Left ventricle myocardium superior (tissue), 1 donor: ENCODE measurements at regions of chr20 and their contacts with region 1.

Region 1: DNA sequence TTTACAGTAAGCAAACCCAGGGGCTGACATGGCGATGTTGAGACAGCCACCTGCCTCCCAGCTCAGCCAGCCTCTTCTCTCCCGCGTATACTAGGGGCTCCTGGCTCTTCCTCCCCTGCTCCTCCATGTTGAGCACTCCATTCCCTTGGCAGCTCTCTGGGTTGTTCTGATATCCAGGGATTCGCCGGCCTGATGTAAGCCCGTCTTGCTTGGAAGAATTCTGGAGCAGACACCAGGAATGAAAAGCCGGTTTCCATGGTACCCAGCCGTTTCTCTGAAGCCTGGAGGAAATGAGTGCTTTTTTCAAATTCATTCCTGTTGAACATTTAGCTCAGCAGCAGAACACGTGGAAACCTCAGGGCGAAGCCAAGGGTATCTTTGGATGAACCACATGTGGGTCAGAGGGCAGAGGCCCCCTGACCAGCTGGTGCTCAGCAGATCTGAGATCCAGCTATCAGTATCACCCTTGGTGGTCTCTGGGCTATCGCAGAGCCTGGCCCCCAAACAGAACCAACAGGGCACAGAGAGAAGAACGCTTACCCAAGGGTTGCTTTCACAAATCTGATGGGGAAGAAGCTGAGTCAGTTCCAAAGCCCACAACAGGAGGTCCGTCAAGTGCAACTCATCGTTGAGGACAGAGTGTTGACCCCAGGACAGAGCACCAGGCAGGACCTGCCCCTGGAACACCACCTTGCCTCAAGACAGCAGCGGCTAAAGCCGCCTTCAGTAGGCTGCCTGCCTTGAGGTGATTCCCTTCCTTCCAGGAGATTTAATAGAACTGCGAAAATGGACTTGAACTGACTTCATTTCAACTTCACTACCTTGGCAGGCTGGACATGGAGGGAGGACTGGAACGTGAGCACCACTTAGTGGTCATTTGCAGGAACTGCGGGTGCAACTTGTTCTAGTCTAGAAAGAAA is 96.1 kb upstream of the RIN2 start:
- DNase-seq: peak; percentile 56
- ATAC-seq: peak; percentile 74

Region 2: GRCh38 chr20:19205977-19206396 is 456.0 kb before region 1 on chr20:
- intact Hi-C with region 1: loop called (anchors 5 kb)
- DNase-seq: peak; percentile 86
- ATAC-seq: peak; percentile 71

Region 3: GRCh38 chr20:19522071-19522801 is 139.7 kb before region 1 on chr20:
- intact Hi-C with region 1: no loop called
- DNase-seq: no peak
- ATAC-seq: no peak

Region 4: DNA sequence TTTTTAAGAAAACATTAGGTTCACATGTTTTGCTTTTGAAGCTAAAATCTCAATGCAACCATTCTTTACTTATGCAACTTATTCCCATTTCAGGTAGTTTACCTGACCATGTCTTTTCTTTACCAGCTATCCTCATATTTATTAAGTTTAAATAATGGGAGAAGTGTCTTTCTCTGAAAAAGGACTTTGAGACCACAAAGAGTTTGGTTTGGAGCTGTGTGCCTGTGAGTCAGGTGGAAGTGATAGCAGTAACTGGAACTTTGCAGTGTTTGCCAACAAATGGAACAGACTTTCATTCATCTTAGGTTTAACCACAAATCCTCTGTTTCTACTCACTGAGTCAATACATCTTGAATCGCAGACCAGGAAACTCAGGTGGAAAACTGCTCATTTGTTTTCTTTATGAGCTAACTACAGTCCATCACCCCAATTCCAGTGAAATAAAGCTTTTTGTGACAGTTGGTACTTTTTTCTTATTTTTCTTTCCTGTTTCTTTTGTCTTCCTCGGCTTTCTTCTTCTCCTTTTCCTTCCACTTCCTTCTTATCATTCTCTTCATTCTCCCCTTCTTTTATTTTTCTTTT is 52.2 kb before region 1 on chr20:
- intact Hi-C with region 1: loop called (anchors 10 kb)
- DNase-seq: no peak
- ATAC-seq: no peak

Region 5: DNA sequence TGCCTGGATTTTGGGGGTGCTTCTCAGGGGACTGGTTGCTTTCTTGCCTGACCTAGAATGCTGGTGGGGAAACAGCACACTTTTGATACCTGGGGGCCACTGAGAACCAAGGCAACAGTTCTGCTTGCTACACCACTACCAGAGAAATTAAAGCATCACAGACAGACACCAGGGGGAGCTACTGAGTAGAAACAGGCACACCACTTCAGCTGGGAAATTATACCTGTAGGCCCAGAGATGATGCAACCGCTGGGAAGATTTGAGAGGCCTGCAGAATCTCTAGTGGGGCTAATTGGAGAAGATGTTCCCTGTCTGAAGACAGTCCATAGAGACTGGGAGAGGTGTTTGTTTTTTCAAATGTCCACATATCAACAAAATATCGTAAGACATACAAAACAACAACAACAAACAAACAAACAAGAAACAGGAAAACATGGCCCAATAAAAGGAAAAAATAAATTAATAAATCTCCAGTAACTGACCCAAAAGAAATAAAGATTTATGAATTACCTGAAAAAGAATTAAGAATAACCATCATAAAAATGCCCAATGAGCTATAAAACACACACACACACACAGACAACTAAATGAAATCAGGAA is 33.3 kb before region 1 on chr20:
- intact Hi-C with region 1: loop called (anchors 5 kb)
- DNase-seq: no peak
- ATAC-seq: peak; percentile 66

Region 6: GRCh38 chr20:20207872-20208271 is 545.9 kb after region 1 on chr20:
- intact Hi-C with region 1: no loop called
- DNase-seq: no peak
- ATAC-seq: no peak